ENCODE measurements at regions of chr1 and their contacts with region 1.

Region 1: GRCh38 chr1:26431979-26432695 is at the start of gene DHDDS:
- DNase-seq: peak; percentile 99
- ATAC-seq: peak; percentile 98
- H3K4me3 Mint-ChIP-seq: peak within 1 kb of the TSS; percentile 92
- H3K27ac Mint-ChIP-seq: peak within 1 kb of the TSS; percentile 92
- H3K4me1 Mint-ChIP-seq: peaks cover 17% of the 10 kb centered on the region
- H3K27me3 Mint-ChIP-seq: no peaks in the 10 kb centered on the region
- total RNA-seq, gene DHDDS: 34.1 to 40.7 TPM

Region 2: GRCh38 chr1:26156704-26157038 is 275.5 kb before region 1 on chr1:
- CTCF ChIA-PET with region 1: no interaction called
- POLR2A ChIA-PET with region 1: no interaction called
- intact Hi-C with region 1: no loop called
- DNase-seq: no peak
- ATAC-seq: no peak
- H3K4me3 Mint-ChIP-seq: no peak overlapping the region
- H3K27ac Mint-ChIP-seq: no peak overlapping the region
- H3K4me1 Mint-ChIP-seq: no peaks in the 10 kb centered on the region
- H3K27me3 Mint-ChIP-seq: peaks cover 14% of the 10 kb centered on the region

Region 3: GRCh38 chr1:26169669-26170471 is 262.3 kb before region 1 on chr1 and contains the start of gene ZNF593:
- CTCF ChIA-PET with region 1: interaction called, 5 read pairs
- POLR2A ChIA-PET with region 1: no interaction called
- intact Hi-C with region 1: loop called in 1 of 2 experiments (anchors 1 kb)
- DNase-seq: peak; percentile 94
- ATAC-seq: peak; percentile 96
- H3K4me3 Mint-ChIP-seq: peak within 1 kb of the TSS; percentile 95
- H3K27ac Mint-ChIP-seq: peak within 1 kb of the TSS; percentile 88
- H3K4me1 Mint-ChIP-seq: peaks cover 10% of the 10 kb centered on the region
- H3K27me3 Mint-ChIP-seq: no peaks in the 10 kb centered on the region
- total RNA-seq, gene ZNF593: 44.6 to 56.3 TPM

Region 4: GRCh38 chr1:26284597-26285360 is 147.4 kb before region 1 on chr1:
- CTCF ChIA-PET with region 1: no interaction called
- POLR2A ChIA-PET with region 1: no interaction called
- intact Hi-C with region 1: loop called in 1 of 2 experiments (anchors 2 kb)
- DNase-seq: peak; percentile 99
- ATAC-seq: peak; percentile 66
- H3K4me3 Mint-ChIP-seq: peak overlapping the region; percentile 61
- H3K27ac Mint-ChIP-seq: peak overlapping the region; percentile 99
- H3K4me1 Mint-ChIP-seq: peaks cover 87% of the 10 kb centered on the region
- H3K27me3 Mint-ChIP-seq: no peaks in the 10 kb centered on the region

Region 5: GRCh38 chr1:26306290-26307229 is 125.6 kb before region 1 on chr1 and contains the start of gene UBXN11:
- CTCF ChIA-PET with region 1: interaction called, 3 read pairs
- POLR2A ChIA-PET with region 1: interaction called, 3 read pairs
- intact Hi-C with region 1: loop called in 1 of 2 experiments (anchors 1 kb)
- DNase-seq: peak; percentile 96
- ATAC-seq: peak; percentile 94
- H3K4me3 Mint-ChIP-seq: peak within 1 kb of the TSS; percentile 90
- H3K27ac Mint-ChIP-seq: peak within 1 kb of the TSS; percentile 95
- H3K4me1 Mint-ChIP-seq: peaks cover 32% of the 10 kb centered on the region
- H3K27me3 Mint-ChIP-seq: no peaks in the 10 kb centered on the region
- total RNA-seq, gene UBXN11: 19.4 to 22.2 TPM

Region 6: GRCh38 chr1:26521669-26522030 is 89.5 kb after region 1 on chr1:
- CTCF ChIA-PET with region 1: no interaction called
- POLR2A ChIA-PET with region 1: no interaction called
- intact Hi-C with region 1: no loop called
- DNase-seq: no peak
- ATAC-seq: no peak
- H3K4me3 Mint-ChIP-seq: no peak overlapping the region
- H3K27ac Mint-ChIP-seq: no peak overlapping the region
- H3K4me1 Mint-ChIP-seq: peaks cover 5% of the 10 kb centered on the region
- H3K27me3 Mint-ChIP-seq: peaks cover 2% of the 10 kb centered on the region

Region 7: GRCh38 chr1:26541816-26542711 is 109.9 kb after region 1 on chr1:
- CTCF ChIA-PET with region 1: no interaction called
- POLR2A ChIA-PET with region 1: no interaction called
- intact Hi-C with region 1: loop called in 1 of 2 experiments (anchors 1 kb)
- DNase-seq: peak; percentile 93
- ATAC-seq: peak; percentile 65
- H3K4me3 Mint-ChIP-seq: peak overlapping the region; percentile 67
- H3K27ac Mint-ChIP-seq: peak overlapping the region; percentile 94
- H3K4me1 Mint-ChIP-seq: peaks cover 83% of the 10 kb centered on the region
- H3K27me3 Mint-ChIP-seq: no peaks in the 10 kb centered on the region

Region 8: GRCh38 chr1:26608895-26609294 is 176.8 kb after region 1 on chr1:
- CTCF ChIA-PET with region 1: no interaction called
- POLR2A ChIA-PET with region 1: no interaction called
- intact Hi-C with region 1: no loop called
- DNase-seq: no peak
- ATAC-seq: no peak
- H3K4me3 Mint-ChIP-seq: no peak overlapping the region
- H3K27ac Mint-ChIP-seq: no peak overlapping the region
- H3K4me1 Mint-ChIP-seq: no peaks in the 10 kb centered on the region
- H3K27me3 Mint-ChIP-seq: peaks cover 3% of the 10 kb centered on the region

Region 9: DNA sequence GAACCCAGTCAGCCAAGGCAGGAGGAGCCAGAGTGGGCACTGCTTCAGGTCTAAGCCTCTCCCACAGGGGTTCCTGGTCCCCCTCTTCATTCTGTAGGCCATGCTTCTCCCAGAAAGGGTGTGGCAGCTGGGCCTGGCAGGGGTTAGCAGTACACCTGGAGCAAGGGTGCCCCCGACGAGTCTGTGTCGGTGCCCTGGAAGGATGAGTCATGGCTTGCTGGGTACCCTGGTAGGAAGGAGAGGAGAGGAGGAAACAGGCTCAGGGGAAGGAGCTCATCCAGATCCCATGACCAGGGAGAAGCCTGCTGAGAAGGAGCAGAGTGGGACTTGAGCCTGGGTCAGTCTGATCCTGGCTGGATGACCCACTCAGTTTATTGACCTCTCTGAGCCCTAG is 517.8 kb after region 1 on chr1:
- CTCF ChIA-PET with region 1: no interaction called
- POLR2A ChIA-PET with region 1: no interaction called
- intact Hi-C with region 1: no loop called
- DNase-seq: no peak
- ATAC-seq: no peak
- H3K4me3 Mint-ChIP-seq: no peak overlapping the region
- H3K27ac Mint-ChIP-seq: no peak overlapping the region
- H3K4me1 Mint-ChIP-seq: no peaks in the 10 kb centered on the region
- H3K27me3 Mint-ChIP-seq: no peaks in the 10 kb centered on the region

Region 10: DNA sequence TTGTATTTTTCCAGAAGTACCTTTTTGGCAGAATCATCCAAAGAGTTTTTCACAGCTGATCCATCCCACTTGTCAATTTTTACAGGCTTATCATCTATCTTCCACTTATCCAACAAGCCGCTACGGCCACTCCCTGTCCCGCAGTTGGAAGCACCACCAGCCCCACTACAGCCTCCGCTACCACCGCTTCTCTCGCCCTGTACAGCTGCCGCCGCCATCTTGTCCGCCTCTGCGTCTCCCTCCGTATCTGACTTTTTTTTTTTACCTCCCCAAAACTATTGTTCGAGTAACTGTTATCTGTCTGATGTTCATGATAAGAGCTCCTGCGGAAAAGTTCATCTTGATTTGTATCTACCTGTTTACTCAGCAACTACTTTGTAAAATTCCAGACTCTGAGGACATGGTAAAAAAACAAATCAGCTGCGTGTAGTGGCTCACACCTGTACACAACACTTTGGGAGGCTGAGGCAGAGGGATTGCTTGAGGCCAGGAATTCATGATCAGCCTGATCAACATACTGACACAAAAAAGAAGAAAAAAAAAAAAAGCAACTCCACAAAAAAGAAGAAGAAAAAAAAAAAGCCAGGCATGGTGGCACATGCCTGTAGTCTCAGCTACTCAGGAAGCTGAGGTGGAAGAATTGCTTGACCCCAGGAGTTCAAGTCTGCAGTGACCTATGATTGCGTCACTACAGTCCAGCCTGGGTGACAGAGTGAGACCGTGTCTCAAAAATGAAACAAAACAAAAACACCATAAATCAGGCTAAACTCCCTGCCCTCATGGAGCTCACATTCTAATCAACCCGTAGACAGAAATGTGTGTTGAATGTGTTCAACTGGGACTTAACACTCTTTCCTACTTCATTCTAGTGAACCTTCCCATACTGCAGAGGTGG is 1664.3 kb after region 1 on chr1:
- CTCF ChIA-PET with region 1: no interaction called
- POLR2A ChIA-PET with region 1: interaction called, 16 read pairs
- intact Hi-C with region 1: no loop called
- DNase-seq: no peak
- ATAC-seq: peak; percentile 44
- H3K4me3 Mint-ChIP-seq: no peak overlapping the region
- H3K27ac Mint-ChIP-seq: no peak overlapping the region
- H3K4me1 Mint-ChIP-seq: peaks cover 3% of the 10 kb centered on the region
- H3K27me3 Mint-ChIP-seq: peaks cover 12% of the 10 kb centered on the region

Measured in activated CD4-positive, alpha-beta T cell treated with anti-CD3 and anti-CD28 coated beads for 36 hours (primary cell).